ENCODE measurements at regions of chr19 and their contacts with region 1.

Region 1: GRCh38 chr19:16330368-16330801 is 5.8 kb downstream of the KLF2 start:
- DNase-seq: peak; percentile 98
- ATAC-seq: peak; percentile 92
- H3K4me3 Mint-ChIP-seq: no peak overlapping the region
- H3K27ac Mint-ChIP-seq: peak overlapping the region; percentile 30
- H3K4me1 Mint-ChIP-seq: peaks cover 59% of the 10 kb centered on the region
- H3K27me3 Mint-ChIP-seq: peaks cover 15% of the 10 kb centered on the region
- CTCF ChIP-seq: no peak

Region 2: DNA sequence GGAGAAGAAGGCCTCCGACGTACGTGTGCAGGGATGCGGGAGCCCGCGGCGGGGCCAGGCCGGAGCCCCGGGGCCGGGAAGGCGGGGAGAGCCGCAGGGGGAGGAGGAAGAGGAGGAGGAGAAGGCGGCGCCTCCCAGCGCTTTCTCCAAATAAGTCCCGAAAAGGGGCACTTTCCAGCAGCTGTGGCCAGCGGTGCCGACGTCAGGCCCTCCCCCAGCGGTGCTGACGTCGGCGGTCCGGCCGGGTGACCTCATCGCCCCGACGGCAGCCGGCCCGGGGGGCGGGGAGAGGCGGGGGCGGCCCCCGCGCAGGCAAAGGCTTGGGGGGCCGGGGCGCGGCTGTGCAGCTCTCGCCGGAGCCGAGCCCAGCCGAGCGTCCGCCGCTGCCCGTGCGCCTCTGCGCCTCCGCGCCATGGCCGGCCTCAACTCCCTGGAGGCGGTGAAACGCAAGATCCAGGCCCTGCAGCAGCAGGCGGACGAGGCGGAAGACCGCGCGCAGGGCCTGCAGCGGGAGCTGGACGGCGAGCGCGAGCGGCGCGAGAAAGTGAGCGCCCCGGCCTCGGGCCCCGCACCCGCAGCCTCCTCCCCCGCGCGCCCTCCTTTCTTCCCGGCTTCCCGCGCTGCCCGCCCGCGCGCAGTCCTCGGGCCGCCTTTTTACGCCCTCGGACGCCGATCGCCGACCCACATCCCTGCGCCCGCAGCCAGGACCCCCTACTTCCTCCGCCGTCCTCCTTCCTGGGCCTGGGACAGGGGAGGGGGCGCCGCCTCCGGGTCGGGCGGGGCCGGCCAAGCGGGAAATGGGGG is 254.0 kb before region 1 on chr19 and contains the start of gene TPM4:
- CTCF ChIA-PET with region 1: no interaction called
- POLR2A ChIA-PET with region 1: interaction called, 3 read pairs
- intact Hi-C with region 1: loop called (anchors 10 kb)
- DNase-seq: peak; percentile 93
- ATAC-seq: peak; percentile 53
- H3K4me3 Mint-ChIP-seq: peak within 1 kb of the TSS; percentile 78
- H3K27ac Mint-ChIP-seq: peak within 1 kb of the TSS; percentile 100
- H3K4me1 Mint-ChIP-seq: peaks cover 59% of the 10 kb centered on the region
- H3K27me3 Mint-ChIP-seq: no peaks in the 10 kb centered on the region
- CTCF ChIP-seq: no peak
- total RNA-seq, gene TPM4: 230 to 232 TPM

Region 3: DNA sequence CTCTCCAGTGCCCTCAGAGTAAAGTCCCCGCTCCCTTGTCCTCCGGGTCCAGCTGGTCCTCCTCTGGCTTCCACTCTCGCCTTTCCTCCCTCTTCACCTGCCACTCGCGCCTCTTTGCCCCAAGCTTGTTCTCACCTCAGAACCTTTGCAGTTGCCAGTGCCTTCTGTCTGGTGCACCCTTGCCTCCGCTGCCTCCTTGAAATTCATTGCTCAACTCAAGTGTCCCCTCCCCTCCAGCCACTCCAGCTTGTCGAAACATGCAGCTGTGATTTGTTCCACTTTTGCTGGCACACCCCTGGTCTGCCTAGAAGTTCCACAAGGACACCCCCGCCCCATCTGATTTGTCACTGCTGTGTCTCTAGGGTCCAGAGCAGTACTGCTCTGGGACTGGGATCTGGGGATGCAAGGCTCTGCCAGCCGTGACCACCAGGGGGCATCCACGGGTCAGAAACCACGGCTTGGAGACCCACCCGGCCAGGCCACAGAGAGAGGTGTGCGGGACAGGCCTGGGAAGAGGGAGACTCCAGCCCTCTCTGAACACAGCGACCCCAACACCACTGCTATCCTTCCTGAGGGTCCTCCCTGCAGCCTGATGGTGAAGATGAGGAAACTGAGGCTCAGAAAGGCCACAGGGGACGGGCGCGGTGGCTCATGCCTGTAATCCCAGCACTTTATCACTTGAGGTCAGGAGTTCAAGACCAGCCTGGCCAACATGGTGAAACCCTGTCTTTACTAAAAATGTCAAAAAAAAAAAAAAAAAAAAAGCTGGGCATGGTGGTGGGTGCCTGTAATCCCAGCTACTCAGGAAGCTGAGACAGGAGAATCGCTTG is 82.8 kb before region 1 on chr19:
- CTCF ChIA-PET with region 1: interaction called, 19 read pairs
- POLR2A ChIA-PET with region 1: interaction called, 3 read pairs
- intact Hi-C with region 1: no loop called
- DNase-seq: peak; percentile 88
- ATAC-seq: peak; percentile 93
- H3K4me3 Mint-ChIP-seq: no peak overlapping the region
- H3K27ac Mint-ChIP-seq: no peak overlapping the region
- H3K4me1 Mint-ChIP-seq: peaks cover 15% of the 10 kb centered on the region
- H3K27me3 Mint-ChIP-seq: no peaks in the 10 kb centered on the region
- CTCF ChIP-seq: peak; percentile 93

Region 4: GRCh38 chr19:16371540-16371986 is 41.2 kb after region 1 on chr19:
- CTCF ChIA-PET with region 1: interaction called, 6 read pairs
- POLR2A ChIA-PET with region 1: interaction called, 13 read pairs
- intact Hi-C with region 1: loop called (anchors 2 kb)
- DNase-seq: peak; percentile 95
- ATAC-seq: peak; percentile 79
- H3K4me3 Mint-ChIP-seq: peak overlapping the region; percentile 3
- H3K27ac Mint-ChIP-seq: peak overlapping the region; percentile 54
- H3K4me1 Mint-ChIP-seq: peaks cover 42% of the 10 kb centered on the region
- H3K27me3 Mint-ChIP-seq: peaks cover 11% of the 10 kb centered on the region
- CTCF ChIP-seq: no peak

Region 5: GRCh38 chr19:16376649-16377048 is 46.3 kb after region 1 on chr19:
- CTCF ChIA-PET with region 1: interaction called, 16 read pairs
- POLR2A ChIA-PET with region 1: interaction called, 12 read pairs
- intact Hi-C with region 1: no loop called
- DNase-seq: peak; percentile 60
- ATAC-seq: peak; percentile 52
- H3K4me3 Mint-ChIP-seq: no peak overlapping the region
- H3K27ac Mint-ChIP-seq: no peak overlapping the region
- H3K4me1 Mint-ChIP-seq: peaks cover 61% of the 10 kb centered on the region
- H3K27me3 Mint-ChIP-seq: no peaks in the 10 kb centered on the region
- CTCF ChIP-seq: peak; percentile 73